ENCODE measurements at regions of chrX and their contacts with region 1.

Region 1: GRCh38 chrX:57595381-57595811 is 3.6 kb downstream of the ZXDB start:
- DNase-seq: no peak
- ATAC-seq: no peak
- H3K4me3 ChIP-seq: peak overlapping the region; percentile 52
- H3K27ac ChIP-seq: peak overlapping the region; percentile 33
- H3K4me1 ChIP-seq: peaks cover 21% of the 10 kb centered on the region
- H3K27me3 ChIP-seq: peaks cover 0 to 6% (median 0%) of the 10 kb centered on the region in 3 donors
- CTCF ChIP-seq: no peak

Region 2: GRCh38 chrX:57900975-57901374 is 305.6 kb after region 1 on chrX:
- intact Hi-C with region 1: loop called in 1 of 2 experiments (anchors 10 kb)
- DNase-seq: no peak
- ATAC-seq: peak; percentile 33 to 75 (median 60)
- H3K4me3 ChIP-seq: peak overlapping the region; percentile 50
- H3K27ac ChIP-seq: peak overlapping the region; percentile 67
- H3K4me1 ChIP-seq: peaks cover 7% of the 10 kb centered on the region
- H3K27me3 ChIP-seq: peaks cover 0 to 4% (median 0%) of the 10 kb centered on the region in 3 donors
- CTCF ChIP-seq: no peak

Measured in psoas muscle (tissue), 8 donors.